PC-9 (cell line): ENCODE measurements at regions of chr19 and their contacts with region 1.

Region 1: DNA sequence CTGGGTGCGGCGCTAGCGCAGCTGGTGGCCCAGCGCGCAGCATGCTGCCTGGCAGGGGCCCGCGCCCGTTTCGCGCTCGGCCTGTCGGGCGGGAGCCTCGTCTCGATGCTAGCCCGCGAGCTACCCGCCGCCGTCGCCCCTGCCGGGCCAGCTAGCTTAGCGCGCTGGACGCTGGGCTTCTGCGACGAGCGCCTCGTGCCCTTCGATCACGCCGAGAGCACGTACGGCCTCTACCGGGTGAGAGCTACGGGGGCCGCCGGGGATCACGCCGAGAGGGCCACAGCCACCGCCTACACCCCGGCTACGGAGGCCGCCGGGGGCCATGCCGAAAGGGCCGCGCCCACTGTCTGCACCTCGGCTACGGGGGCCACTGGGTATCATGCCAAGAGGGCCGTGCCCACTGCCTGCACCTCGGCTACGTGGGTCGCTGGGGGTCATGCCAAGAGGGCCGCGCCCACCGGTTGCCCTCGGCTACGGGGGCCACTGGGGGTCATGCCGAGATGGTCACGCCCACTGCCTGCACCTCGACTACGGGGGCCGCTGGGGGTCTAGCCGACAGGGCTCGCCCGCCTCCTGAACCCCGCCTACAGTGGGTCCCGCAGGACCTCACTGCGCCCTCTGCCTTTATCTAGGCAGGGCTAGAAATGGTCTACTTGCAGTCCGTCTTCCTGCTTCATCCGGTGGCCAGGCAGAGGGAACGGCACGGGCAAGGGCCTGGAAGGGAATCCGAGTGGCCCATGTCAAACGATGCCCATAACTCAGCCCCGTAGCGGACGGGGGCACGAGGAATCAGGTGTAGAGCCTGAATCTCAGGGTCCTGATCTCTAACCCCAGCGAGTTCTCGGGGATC is 500 bp downstream of the PGLS start:
- DNase-seq: peak; percentile 55 to 78
- H3K4me3 ChIP-seq: peak overlapping the region; percentile 88
- H3K27ac ChIP-seq: peak overlapping the region; percentile 98
- H3K4me1 ChIP-seq: peaks cover 42% of the 10 kb centered on the region
- H3K27me3 ChIP-seq: no peaks in the 10 kb centered on the region
- CTCF ChIP-seq: no peak

Region 2: DNA sequence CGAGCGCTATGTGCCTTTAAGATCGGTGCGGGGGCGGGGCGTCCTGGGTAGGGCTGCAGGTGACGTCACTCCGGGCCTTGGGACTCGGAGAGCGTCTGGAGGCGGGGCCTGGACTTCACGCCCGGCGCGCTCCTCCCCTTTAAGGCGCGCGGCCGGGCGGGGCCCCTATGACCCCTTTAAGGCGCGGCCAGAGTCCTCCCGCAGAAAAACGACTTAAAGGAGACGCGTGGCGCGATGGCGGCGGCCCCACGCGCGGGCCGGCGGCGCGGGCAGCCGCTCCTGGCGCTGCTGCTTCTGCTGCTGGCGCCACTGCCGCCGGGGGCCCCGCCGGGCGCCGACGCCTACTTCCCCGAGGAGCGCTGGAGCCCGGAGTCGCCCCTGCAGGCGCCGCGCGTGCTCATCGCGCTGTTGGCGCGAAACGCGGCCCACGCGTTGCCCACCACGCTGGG is 43.6 kb after region 1 on chr19 and contains the start of gene COLGALT1:
- CTCF ChIA-PET with region 1: no interaction called
- POLR2A ChIA-PET with region 1: interaction called, 6 read pairs
- intact Hi-C with region 1: loop called (anchors 5 kb)
- DNase-seq: peak; percentile 92 to 95
- H3K4me3 ChIP-seq: peak within 1 kb of the TSS; percentile 95
- H3K27ac ChIP-seq: 0 out of 2 replicates have a peak within 1 kb of the TSS, but pooled peaks have one; percentile 0
- H3K4me1 ChIP-seq: peaks cover 7% of the 10 kb centered on the region
- H3K27me3 ChIP-seq: no peaks in the 10 kb centered on the region
- CTCF ChIP-seq: no peak
- total RNA-seq, gene COLGALT1: 82.9 and 88.8 TPM in 2 replicates

Region 3: GRCh38 chr19:17562561-17562960 is 50.6 kb after region 1 on chr19:
- CTCF ChIA-PET with region 1: interaction called, 11 read pairs
- POLR2A ChIA-PET with region 1: no interaction called
- intact Hi-C with region 1: loop called (anchors 5 kb)
- DNase-seq: no peak
- H3K4me3 ChIP-seq: no peak overlapping the region
- H3K27ac ChIP-seq: no peak overlapping the region
- H3K4me1 ChIP-seq: peaks cover 26% of the 10 kb centered on the region
- H3K27me3 ChIP-seq: no peaks in the 10 kb centered on the region
- CTCF ChIP-seq: no peak